Mucosa of descending colon (tissue), 3 donors: ENCODE measurements at regions of chr19 and their contacts with region 1.

Region 1: GRCh38 chr19:39124136-39124764 is 1.3 kb upstream of the PAK4 start:
- DNase-seq: no peak
- ATAC-seq: no peak
- H3K4me3 ChIP-seq: no peak overlapping the region
- H3K4me1 ChIP-seq: peaks cover 38% of the 10 kb centered on the region
- CTCF ChIP-seq: no peak

Region 2: DNA sequence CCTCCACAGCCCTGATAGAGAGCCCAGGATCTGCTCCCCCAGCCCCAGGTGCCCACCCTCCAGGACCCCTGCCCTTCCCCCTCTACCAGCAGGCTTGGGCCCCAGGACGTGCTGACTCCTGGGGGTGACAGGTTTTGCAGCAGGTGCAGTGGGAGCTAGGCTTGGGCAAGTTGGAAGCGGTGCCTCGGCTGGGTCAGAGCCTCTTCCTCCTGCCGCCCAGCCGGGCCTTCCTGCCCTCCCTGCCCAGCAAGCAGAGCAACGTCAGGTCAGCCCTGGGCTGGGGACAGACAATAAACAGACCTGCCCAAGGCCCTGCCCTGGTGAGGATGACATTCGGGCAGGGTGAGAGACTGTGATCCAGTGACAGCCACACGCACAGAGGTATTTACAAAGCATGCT is 63.3 kb after region 1 on chr19:
- intact Hi-C with region 1: loop called in 1 of 2 experiments (anchors 5 kb)
- DNase-seq: no peak
- ATAC-seq: peak; percentile 37
- H3K4me3 ChIP-seq: no peak overlapping the region
- H3K4me1 ChIP-seq: no peaks in the 10 kb centered on the region
- CTCF ChIP-seq: no peak

Region 3: DNA sequence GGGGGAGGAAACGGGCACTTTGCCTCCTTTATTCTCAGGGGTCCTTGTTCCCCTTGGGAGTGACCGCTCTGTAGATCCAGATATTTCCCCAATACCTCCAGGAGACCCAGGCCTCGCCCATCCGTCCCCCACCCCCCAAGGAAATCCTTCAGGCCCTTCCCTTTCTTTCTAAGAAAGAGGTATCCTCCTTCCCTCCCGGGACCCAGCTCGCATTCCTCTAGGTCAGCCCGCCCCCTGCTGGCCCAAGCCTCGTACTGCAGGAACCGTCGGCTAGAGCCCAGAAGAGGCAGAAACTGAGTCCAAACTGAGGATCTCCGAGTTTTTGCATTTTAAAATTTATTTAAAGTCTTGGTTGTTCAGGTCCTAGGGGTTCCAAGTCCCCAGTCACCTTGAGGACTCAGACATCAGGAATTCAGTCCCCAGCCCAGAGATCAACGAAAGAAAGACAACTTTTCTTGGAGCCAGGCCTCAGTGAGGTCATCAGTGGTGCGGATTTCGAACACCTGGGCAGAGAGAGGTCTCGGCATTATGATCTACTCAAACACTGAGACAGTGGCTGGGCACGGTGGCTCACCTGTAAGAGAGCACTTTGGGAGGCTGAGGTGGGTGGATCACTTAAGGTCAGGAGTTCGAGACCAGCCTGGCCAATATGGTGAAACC is 203.9 kb after region 1 on chr19:
- intact Hi-C with region 1: loop called (anchors 5 kb)
- DNase-seq: peak; percentile 83 to 93 (median 90)
- ATAC-seq: peak; percentile 93
- H3K4me3 ChIP-seq: no peak overlapping the region
- H3K4me1 ChIP-seq: no peaks in the 10 kb centered on the region
- CTCF ChIP-seq: peak; percentile 98